Dorsolateral prefrontal cortex (tissue), 120 donors: ENCODE measurements at regions of chr12 and their contacts with region 1.

Region 1: GRCh38 chr12:79997096-79997791 is 62.3 kb upstream of the PPP1R12A start:
- DNase-seq: no peak
- H3K4me3 ChIP-seq: no peak overlapping the region
- H3K27ac ChIP-seq: no peak overlapping the region
- H3K27me3 ChIP-seq: no peaks in the 10 kb centered on the region
- CTCF ChIP-seq: no peak

Region 2: DNA sequence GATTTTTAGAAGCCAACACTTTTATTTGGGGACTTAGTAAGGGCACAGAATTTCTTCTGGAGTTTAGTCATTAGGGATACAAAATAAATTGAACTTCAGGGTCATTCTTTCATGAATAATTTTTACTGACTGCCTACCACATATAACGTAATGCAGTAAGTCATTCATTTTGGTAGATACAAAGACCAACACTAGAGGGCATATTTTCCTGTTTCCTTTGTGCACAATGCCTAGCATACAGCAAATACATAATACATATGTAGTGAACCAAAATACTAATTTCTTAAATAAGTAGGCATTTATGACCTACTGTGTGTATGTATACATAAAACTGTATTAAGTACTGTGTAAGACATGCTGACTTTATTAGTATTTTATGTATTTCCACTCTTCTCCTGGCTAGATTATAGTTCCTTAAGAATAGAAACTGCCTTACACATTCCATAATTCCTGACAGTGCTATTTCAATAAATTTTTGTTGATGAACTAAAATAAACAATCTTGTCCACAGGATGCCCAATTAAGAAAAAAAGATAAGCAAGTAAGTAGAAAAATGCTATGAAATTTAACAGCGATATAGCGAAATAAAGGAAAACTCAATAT is 110.2 kb before region 1 on chr12:
- intact Hi-C with region 1: no loop called
- DNase-seq: no peak
- H3K4me3 ChIP-seq: no peak overlapping the region
- H3K27ac ChIP-seq: no peak overlapping the region
- H3K27me3 ChIP-seq: no peaks in the 10 kb centered on the region
- CTCF ChIP-seq: peak; percentile 23 to 70 (median 56)

Region 3: DNA sequence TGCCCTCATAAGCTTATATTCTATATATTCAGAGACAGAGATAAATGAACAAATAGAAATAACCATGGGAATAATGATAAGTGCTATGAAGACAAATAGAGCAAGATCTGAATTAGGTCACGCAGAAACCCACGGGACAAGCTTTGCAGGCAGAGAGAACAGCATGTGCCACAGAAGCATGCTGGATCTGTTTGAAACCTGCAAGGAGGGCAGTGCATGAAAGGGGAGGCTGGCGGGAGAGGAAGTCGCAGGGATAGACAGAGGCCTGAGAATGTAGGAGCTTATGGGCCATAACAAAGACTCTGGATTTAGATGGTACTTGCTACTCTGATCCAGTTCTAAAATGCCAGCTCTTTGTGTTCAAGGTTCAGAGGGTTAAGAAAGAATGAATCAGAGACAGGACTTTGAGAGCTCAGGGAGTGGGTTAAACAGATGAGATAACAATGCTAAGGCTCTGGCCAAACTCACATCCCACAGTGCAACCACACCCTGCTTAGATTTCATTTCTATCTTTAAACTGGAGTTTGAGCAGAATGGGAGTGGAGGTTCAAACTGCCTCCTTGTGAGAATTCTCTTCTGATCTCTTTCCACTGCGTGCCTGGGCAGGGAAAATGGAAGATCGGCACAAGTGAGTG is 13.1 kb before region 1 on chr12:
- intact Hi-C with region 1: loop called in 1 of 2 experiments (anchors 2 kb)
- DNase-seq: no peak
- H3K4me3 ChIP-seq: no peak overlapping the region
- H3K27ac ChIP-seq: no peak overlapping the region
- H3K27me3 ChIP-seq: no peaks in the 10 kb centered on the region
- CTCF ChIP-seq: no peak